ENCODE measurements at regions of chr3 and their contacts with region 1.

Region 1: DNA sequence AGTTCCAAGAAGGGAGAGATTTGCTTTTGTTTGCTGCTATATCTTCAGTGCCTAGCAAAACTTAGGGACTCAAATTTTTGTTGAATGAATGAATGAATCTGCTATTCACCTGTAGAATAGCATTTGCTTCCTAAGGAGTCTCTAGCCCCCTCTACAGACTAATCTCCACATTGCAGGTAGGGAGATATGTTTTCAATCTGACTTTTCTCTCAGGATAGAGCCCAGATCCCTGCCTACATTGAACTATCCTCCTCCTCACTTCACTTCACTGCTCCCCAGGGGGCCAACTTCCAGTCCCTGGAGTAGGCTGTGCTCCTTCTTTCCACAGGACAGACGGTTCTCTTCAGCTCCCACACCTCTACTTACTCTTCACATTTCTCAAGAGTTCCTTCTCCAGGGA is 81.9 kb upstream of the PTX3 start:
- DNase-seq: peak; percentile 79
- ATAC-seq: peak; percentile 42
- H3K4me3 ChIP-seq: no peak overlapping the region
- H3K27ac ChIP-seq: no peak overlapping the region
- H3K4me1 ChIP-seq: peaks cover 11% of the 10 kb centered on the region
- H3K27me3 ChIP-seq: no peaks in the 10 kb centered on the region
- CTCF ChIP-seq: peak; percentile 74

Region 2: DNA sequence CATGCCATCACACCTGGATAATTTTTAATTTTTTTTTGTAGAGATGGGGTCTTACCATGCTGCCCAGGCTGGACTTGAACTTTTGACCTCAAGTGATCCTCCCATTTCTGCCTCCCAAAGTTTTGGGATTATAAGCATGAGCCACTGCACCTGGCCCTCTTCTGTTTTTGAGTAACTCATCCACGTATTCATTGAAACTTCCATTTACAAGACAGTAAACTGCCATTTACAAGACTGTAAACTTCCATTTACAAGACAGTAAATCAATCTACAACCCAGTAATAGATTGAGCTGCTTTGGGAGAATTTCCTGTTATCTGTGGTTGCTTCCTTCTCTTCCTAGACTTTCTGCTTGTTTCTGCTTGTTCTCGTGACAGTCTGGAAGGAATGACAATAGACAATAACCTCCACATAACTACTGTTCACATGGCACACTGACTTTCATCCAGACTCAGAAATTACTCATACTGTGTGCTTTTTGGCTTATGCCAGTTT is 80.0 kb before region 1 on chr3:
- CTCF ChIA-PET with region 1: no interaction called
- POLR2A ChIA-PET with region 1: no interaction called
- intact Hi-C with region 1: loop called (anchors 5 kb)
- DNase-seq: peak; percentile 83
- ATAC-seq: peak; percentile 93
- H3K4me3 ChIP-seq: no peak overlapping the region
- H3K27ac ChIP-seq: peak overlapping the region; percentile 38
- H3K4me1 ChIP-seq: peaks cover 10% of the 10 kb centered on the region
- H3K27me3 ChIP-seq: no peaks in the 10 kb centered on the region
- CTCF ChIP-seq: no peak

Region 3: GRCh38 chr3:157436583-157437291 is 82.0 kb after region 1 on chr3 and contains the start of gene PTX3:
- CTCF ChIA-PET with region 1: interaction called, 3 read pairs
- POLR2A ChIA-PET with region 1: no interaction called
- intact Hi-C with region 1: loop called (anchors 5 kb)
- DNase-seq: peak; percentile 90
- ATAC-seq: peak; percentile 51
- H3K4me3 ChIP-seq: peak within 1 kb of the TSS; percentile 82
- H3K27ac ChIP-seq: peak within 1 kb of the TSS; percentile 68
- H3K4me1 ChIP-seq: peaks cover 16% of the 10 kb centered on the region
- H3K27me3 ChIP-seq: no peaks in the 10 kb centered on the region
- CTCF ChIP-seq: no peak
- total RNA-seq, gene PTX3: 24.4 and 27.3 TPM in 2 replicates

Measured in PC-3 (cell line).